ENCODE measurements at regions of chr13 and their contacts with region 1.

Region 1: GRCh38 chr13:51803422-51804294 is at the start of gene DHRS12:
- DNase-seq: peak; percentile 97
- H3K4me3 ChIP-seq: peak within 1 kb of the TSS; percentile 75 to 88 (median 83)
- H3K27ac ChIP-seq: peak within 1 kb of the TSS; percentile 98 to 100 (median 100)
- H3K4me1 ChIP-seq: peaks cover 30 to 59% (median 54%) of the 10 kb centered on the region in 4 donors
- H3K27me3 ChIP-seq: no peaks in the 10 kb centered on the region
- CTCF ChIP-seq: peak in 1 of 3 experiments; percentile 19
- EP300 ChIP-seq: no peak
- POLR2A ChIP-seq: peak; percentile 74
- total RNA-seq, gene DHRS12: 10.3 to 18.6 (median 14.9) TPM

Region 2: DNA sequence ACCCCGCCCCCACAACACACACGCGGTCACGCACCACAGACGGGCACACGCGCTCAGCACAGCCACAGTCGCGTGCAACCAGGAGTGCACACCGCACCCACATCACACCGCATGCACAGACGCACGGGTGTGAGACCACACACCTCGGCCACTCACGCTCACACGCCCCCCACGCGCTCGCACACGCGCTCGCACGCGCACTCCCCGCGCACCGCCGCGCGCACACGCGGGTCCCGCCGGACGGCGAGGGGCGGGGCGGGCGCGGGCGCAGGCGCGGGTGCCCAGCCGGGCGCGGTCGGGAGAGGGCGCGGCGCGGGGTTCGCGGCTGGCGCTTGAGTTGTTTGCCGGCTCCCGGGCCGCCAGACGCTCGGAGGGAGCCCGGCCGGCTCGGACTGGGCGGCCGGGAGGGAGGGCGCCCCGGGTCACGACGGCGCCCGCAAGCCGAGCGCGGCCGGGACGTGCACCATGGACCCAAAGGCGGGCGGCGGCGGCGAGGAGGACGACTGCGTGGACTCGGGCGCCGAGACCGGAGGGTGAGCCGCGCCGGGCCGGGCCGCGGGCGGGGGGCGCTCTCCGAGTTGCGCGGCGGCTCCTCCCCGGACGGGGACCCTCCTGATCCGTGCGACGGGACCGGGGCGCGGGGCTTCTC is 581.5 kb before region 1 on chr13 and contains the start of gene FAM124A:
- intact Hi-C with region 1: loop called (anchors 5 kb)
- DNase-seq: no peak
- H3K4me3 ChIP-seq: peak within 1 kb of the TSS; percentile 84 to 99 (median 97)
- H3K27ac ChIP-seq: peak within 1 kb of the TSS; percentile 80 to 91 (median 90)
- H3K4me1 ChIP-seq: peaks cover 15 to 54% (median 44%) of the 10 kb centered on the region in 4 donors
- H3K27me3 ChIP-seq: no peaks in the 10 kb centered on the region
- CTCF ChIP-seq: peak in 2 of 3 experiments; percentile 45 to 51
- EP300 ChIP-seq: no peak
- POLR2A ChIP-seq: no peak
- total RNA-seq, gene FAM124A: 17.0 to 30.3 (median 21.0) TPM

Region 3: DNA sequence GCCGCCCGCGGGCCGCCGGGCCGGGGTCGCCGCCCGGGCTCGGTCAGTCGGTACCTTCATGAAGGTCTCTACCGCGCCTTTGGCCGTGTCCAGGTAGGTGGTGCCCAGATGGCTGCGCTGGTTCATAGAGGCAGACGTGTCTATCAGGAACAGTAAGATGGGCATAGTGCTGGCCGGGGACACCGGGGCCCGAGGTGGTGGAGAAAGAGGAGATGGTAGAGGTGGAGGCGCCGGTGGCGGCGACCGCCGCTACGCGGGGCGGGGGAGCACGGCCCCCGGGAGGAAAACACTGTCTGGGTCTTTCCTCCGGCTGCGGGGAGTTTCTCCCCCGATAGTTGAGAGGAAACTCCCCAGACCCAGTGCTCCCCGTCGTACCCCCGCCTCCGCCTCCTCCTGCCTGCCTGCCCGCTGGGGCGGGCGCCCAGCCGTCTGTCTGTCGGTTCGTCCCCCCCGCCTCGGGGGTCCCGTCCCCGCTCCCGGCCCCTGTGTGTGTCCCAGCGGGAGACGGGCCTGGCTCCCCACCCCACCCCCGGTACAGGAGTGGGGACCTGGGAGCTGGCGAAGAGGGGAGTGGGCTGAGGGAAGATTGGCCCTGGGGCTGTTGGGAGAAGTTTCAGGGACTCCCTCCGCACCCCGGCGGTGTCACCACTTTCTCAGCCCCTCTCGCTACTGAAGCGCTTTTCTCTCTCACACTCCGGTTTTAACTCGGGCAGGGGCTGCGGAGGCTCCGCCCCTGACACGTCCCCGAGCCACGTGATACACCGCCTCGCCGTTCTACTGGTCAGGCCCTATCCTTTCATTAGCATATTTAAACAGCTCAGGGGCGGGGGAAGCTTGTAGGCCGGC is 351.1 kb before region 1 on chr13 and contains the start of gene INTS6:
- intact Hi-C with region 1: loop called (anchors 5 kb)
- DNase-seq: peak; percentile 100
- H3K4me3 ChIP-seq: peak within 1 kb of the TSS; percentile 76 to 99 (median 93)
- H3K27ac ChIP-seq: peak within 1 kb of the TSS; percentile 98 to 100 (median 100)
- H3K4me1 ChIP-seq: peaks cover 22 to 44% (median 36%) of the 10 kb centered on the region in 4 donors
- H3K27me3 ChIP-seq: no peaks in the 10 kb centered on the region
- CTCF ChIP-seq: no peak
- EP300 ChIP-seq: no peak
- POLR2A ChIP-seq: peak; percentile 99
- total RNA-seq, gene INTS6: 24.3 to 34.5 (median 28.9) TPM